Heart left ventricle (tissue), 16 donors: ENCODE measurements at regions of chr3 and their contacts with region 1.

Region 1: DNA sequence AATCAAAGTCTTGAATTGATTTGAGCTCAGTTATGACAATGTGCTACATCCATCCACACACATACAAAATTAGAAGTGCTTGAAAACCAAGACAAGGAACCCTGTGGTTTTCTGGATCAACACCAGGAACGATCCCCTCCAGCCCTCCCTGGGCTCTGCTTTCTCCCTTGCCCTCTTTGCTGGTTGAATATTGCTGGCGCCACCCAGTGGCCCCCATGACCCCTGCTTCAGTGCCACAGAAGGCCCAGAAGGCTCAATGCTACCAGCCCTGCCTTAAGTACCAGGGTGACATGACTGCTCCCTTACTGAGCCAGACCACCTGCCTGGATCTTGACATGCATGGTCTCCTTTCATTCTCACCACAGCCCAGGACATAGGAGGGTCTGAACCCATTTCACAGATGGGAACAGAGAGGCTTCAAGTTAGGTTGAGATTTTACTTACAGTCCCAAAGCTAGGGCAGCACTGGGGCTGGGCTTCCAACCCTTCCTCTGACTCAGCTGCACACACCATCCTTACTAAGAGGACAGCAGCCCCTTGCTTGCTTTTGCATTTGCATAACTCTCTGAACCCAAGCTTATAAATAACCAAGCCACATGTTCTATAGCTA is 15.0 kb downstream of the IL12A start:
- DNase-seq: peak; percentile 45 to 76 (median 62)
- ATAC-seq: peak; percentile 69 to 91 (median 87)
- H3K4me3 ChIP-seq: no peak overlapping the region
- H3K27ac ChIP-seq: no peak overlapping the region
- H3K4me1 ChIP-seq: peaks cover 0 to 4% (median 0%) of the 10 kb centered on the region in 12 donors
- H3K27me3 ChIP-seq: no peaks in the 10 kb centered on the region
- CTCF ChIP-seq: peak; percentile 54 to 71 (median 62)
- POLR2A ChIP-seq: no peak

Region 2: DNA sequence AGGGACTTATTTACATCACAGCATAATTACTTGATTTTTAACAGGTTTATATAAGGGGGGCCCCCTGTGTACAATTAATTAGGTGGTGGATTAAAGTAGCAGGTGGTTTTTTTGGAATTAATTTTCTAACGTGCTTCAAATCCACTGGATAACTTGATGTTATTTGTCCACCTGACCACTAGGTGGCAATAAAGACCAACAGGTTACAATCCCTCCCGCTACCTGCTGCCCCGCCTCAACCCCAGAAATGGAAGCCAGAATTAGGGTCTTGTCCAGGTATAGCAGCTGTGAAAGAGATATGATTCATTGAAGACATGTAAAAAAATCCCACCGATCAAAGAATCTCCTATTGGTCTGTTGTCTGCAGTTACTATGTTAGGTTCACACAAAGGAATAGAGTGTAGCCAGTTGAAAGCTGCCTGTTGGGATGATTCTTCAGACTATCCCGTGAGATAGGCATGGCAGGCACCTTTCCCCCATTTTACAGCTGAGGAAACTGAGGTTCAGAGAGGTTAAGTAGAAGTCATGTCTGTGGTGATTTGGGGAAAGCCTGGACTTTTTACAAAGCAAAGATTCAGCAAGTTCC is 1157.8 kb before region 1 on chr3:
- intact Hi-C with region 1: loop called in 2 of 10 experiments (anchors 10 kb)
- DNase-seq: no peak
- ATAC-seq: no peak
- H3K4me3 ChIP-seq: no peak overlapping the region
- H3K27ac ChIP-seq: no peak overlapping the region
- H3K4me1 ChIP-seq: no peaks in the 10 kb centered on the region
- H3K27me3 ChIP-seq: no peaks in the 10 kb centered on the region
- CTCF ChIP-seq: peak; percentile 40 to 75 (median 62)
- POLR2A ChIP-seq: no peak

Region 3: GRCh38 chr3:159266779-159267178 is 736.8 kb before region 1 on chr3:
- intact Hi-C with region 1: loop called (anchors 2 to 10 kb)
- DNase-seq: no peak
- ATAC-seq: peak in 1 of 4 donors; percentile 34
- H3K4me3 ChIP-seq: no peak overlapping the region
- H3K27ac ChIP-seq: no peak overlapping the region
- H3K4me1 ChIP-seq: no peaks in the 10 kb centered on the region
- H3K27me3 ChIP-seq: no peaks in the 10 kb centered on the region
- CTCF ChIP-seq: peak in 8 of 12 donors; percentile 9 to 38 (median 32)
- POLR2A ChIP-seq: no peak

Region 4: GRCh38 chr3:159565319-159565718 is 438.3 kb before region 1 on chr3:
- intact Hi-C with region 1: no loop called
- DNase-seq: no peak
- ATAC-seq: no peak
- H3K4me3 ChIP-seq: no peak overlapping the region
- H3K27ac ChIP-seq: no peak overlapping the region
- H3K4me1 ChIP-seq: no peaks in the 10 kb centered on the region
- H3K27me3 ChIP-seq: no peaks in the 10 kb centered on the region
- CTCF ChIP-seq: no peak
- POLR2A ChIP-seq: no peak

Region 5: DNA sequence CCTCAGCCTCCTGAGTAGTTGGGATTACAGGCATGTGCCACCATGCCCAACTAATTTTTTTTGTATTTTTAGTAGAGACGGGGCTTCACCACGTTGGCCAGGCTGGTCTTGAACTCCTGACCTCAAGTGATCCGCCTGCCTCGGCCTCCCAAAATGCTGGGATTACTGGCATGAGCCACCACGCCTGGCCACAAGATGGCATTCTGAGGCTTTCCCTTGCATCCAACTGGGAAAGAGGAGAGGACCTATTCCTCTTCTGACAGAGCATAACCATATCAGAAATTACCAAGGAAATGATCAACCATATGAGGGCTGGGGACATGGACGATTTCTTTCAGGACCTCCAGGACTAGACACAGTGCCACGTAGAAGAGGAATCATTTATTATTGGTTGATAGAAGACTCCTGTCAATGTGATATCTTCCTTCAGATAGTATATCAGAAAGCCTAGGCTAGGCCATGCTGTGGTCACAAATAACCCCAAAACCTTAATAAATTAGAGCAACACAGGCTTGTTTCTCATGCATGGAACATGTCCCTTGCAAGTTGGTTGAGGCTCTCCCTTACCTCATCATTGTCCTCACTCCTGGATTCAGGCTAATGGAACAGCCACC is 387.3 kb before region 1 on chr3:
- intact Hi-C with region 1: loop called in 7 of 10 experiments (anchors 5 to 10 kb)
- DNase-seq: peak; percentile 32 to 67 (median 47)
- ATAC-seq: peak; percentile 68 to 81 (median 76)
- H3K4me3 ChIP-seq: no peak overlapping the region
- H3K27ac ChIP-seq: no peak overlapping the region
- H3K4me1 ChIP-seq: peaks cover 0 to 11% (median 3%) of the 10 kb centered on the region in 12 donors
- H3K27me3 ChIP-seq: no peaks in the 10 kb centered on the region
- CTCF ChIP-seq: peak; percentile 33 to 76 (median 65)
- POLR2A ChIP-seq: no peak

Region 6: DNA sequence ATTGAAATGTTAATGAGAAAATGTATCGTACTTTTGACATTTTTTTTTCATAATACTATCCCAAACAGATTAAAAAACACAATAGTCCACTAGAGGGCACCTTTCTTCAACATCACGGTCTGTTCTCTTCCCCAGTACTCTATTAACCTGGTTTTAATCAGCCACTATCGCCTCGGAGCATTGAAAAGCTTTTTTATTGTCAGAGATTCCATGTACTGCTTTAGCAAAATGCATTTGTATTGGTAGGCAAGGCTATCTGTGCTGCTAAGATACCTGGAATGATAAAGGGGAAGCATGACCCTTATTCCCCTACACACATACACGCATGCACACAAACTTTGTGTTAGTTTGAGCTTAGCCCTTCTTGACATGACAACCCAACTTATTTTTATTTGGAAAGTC is 175.1 kb before region 1 on chr3:
- intact Hi-C with region 1: loop called (anchors 2 to 5 kb)
- DNase-seq: no peak
- ATAC-seq: peak; percentile 41 to 74 (median 52)
- H3K4me3 ChIP-seq: no peak overlapping the region
- H3K27ac ChIP-seq: peak overlapping the region in 6 of 12 donors; percentile 3 to 52 (median 32)
- H3K4me1 ChIP-seq: peaks cover 4 to 61% (median 32%) of the 10 kb centered on the region in 12 donors
- H3K27me3 ChIP-seq: no peaks in the 10 kb centered on the region
- CTCF ChIP-seq: peak; percentile 44 to 74 (median 60)
- POLR2A ChIP-seq: no peak

Region 7: DNA sequence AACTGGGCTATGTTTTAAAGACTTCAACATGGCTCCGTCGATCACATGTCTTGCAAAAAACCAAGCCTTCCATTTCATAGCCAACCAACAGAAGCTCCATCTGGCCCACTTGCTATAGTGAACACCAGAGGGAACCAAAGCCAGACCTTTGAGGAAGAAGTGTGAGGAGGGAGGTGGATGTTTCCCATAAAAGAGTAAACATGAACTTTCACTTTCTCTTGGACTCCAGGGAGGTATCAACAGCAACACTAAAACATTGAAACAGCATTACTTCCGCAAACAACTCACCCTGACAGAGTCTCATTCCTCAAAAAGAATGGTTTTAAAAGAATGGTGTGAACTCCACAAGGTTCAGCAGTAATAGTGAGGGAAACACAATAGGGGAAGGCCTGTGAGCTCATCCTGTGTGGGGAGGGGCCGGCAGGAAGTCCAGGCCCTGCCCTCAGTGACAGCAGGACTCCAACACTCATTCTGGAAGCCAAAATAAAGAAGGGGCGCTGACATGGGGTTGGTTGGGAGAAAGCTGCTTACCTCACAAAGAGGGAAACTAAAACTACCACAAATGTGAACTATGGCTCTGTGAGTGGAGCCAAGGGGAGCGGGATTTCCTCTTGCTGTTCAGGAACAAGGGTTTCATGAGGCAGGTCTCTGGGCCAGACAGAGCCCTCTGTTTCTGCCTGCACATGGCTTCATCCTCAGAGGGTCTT is 74.0 kb before region 1 on chr3:
- intact Hi-C with region 1: loop called in 2 of 10 experiments (anchors 2 to 5 kb)
- DNase-seq: peak in 3 of 5 donors; percentile 32 to 57 (median 49)
- ATAC-seq: peak; percentile 56 to 94 (median 78)
- H3K4me3 ChIP-seq: no peak overlapping the region
- H3K27ac ChIP-seq: peak overlapping the region; percentile 27 to 84 (median 52)
- H3K4me1 ChIP-seq: peaks cover 0 to 26% (median 9%) of the 10 kb centered on the region in 12 donors
- H3K27me3 ChIP-seq: no peaks in the 10 kb centered on the region
- CTCF ChIP-seq: peak in 11 of 12 donors; percentile 18 to 49 (median 30)
- POLR2A ChIP-seq: no peak

Region 8: GRCh38 chr3:159964166-159964973 is 39.3 kb before region 1 on chr3:
- intact Hi-C with region 1: no loop called
- DNase-seq: no peak
- ATAC-seq: no peak
- H3K4me3 ChIP-seq: no peak overlapping the region
- H3K27ac ChIP-seq: no peak overlapping the region
- H3K4me1 ChIP-seq: peaks cover 0 to 3% (median 0%) of the 10 kb centered on the region in 12 donors
- H3K27me3 ChIP-seq: no peaks in the 10 kb centered on the region
- CTCF ChIP-seq: no peak
- POLR2A ChIP-seq: no peak